ENCODE measurements at regions of chr3 and their contacts with region 1.

Region 1: DNA sequence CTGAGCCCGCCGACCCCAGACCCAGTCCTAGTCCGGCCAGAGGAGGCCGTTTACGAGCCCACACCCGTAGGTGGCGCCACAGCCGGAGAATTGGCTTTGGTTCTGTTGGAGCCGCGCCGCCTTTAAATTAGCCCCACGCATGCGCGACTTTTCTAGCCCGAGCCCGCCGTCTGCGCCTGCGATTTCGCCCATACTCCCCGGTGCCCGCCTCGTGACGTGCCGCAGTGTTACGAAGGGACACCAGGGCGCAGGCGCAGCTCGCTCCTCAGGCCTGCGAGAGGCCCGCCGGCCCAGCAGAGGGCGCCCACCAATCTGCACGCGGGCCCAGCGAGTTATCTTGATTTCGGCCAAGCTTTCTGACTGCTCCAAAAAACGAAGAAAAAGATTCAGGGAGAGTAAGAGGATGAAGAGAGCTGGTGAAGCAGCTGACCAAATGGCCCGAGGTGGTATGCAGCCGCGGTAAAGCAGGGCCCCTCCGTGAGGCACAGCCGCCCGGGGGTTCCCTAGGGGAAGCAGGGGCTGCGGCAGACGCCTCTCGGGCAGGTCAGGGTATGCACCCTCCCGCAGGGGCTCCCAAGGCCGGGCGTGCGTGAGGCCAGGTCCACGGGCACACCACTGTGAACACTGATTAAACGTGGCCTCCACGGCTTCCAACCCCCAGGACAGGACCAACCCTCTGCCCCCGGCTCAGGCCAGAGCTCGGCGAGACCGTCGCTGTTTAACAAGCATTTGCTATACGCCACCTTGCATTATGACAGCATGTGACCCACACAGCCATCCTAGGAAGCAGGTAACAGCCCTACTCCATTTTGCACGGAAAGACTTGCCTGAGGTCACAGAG is 32.8 kb downstream of the RPN1 start:
- DNase-seq: peak; percentile 97 to 99 (median 98)
- ATAC-seq: peak; percentile 95 to 98 (median 96)
- H3K4me3 ChIP-seq: peak overlapping the region; percentile 79 to 96 (median 87)
- H3K27ac ChIP-seq: peak overlapping the region; percentile 76 to 93 (median 88)
- H3K4me1 ChIP-seq: peaks cover 6 to 37% (median 17%) of the 10 kb centered on the region in 12 donors
- H3K27me3 ChIP-seq: no peaks in the 10 kb centered on the region
- CTCF ChIP-seq: peak; percentile 91 to 99 (median 94)
- POLR2A ChIP-seq: peak in 1 of 2 donors; percentile 56

Region 2: GRCh38 chr3:128537121-128537703 is 80.6 kb before region 1 on chr3:
- intact Hi-C with region 1: no loop called
- DNase-seq: no peak
- ATAC-seq: no peak
- H3K4me3 ChIP-seq: no peak overlapping the region
- H3K27ac ChIP-seq: no peak overlapping the region
- H3K4me1 ChIP-seq: no peaks in the 10 kb centered on the region
- H3K27me3 ChIP-seq: peaks cover 0 to 25% (median 0%) of the 10 kb centered on the region in 9 donors
- CTCF ChIP-seq: no peak
- POLR2A ChIP-seq: no peak

Region 3: GRCh38 chr3:128650096-128651050 is 32.6 kb after region 1 on chr3 and contains the start of gene RPN1:
- intact Hi-C with region 1: loop called in 1 of 10 experiments (anchors 5 kb)
- DNase-seq: peak; percentile 97 to 98 (median 98)
- ATAC-seq: peak; percentile 98 to 100 (median 100)
- H3K4me3 ChIP-seq: peak within 1 kb of the TSS; percentile 76 to 100 (median 92)
- H3K27ac ChIP-seq: peak within 1 kb of the TSS; percentile 92 to 99 (median 98)
- H3K4me1 ChIP-seq: peaks cover 5 to 36% (median 18%) of the 10 kb centered on the region in 12 donors
- H3K27me3 ChIP-seq: no peaks in the 10 kb centered on the region
- CTCF ChIP-seq: peak in 1 of 12 donors; percentile 7
- POLR2A ChIP-seq: peak; percentile 48 to 71
- total RNA-seq, gene RPN1: 71.7 to 161 (median 119) TPM

Region 4: GRCh38 chr3:128680602-128681368 is 63.0 kb after region 1 on chr3:
- intact Hi-C with region 1: loop called in 1 of 10 experiments (anchors 5 kb)
- DNase-seq: peak; percentile 99 to 100 (median 100)
- ATAC-seq: peak; percentile 100
- H3K4me3 ChIP-seq: peak overlapping the region; percentile 45 to 82 (median 70)
- H3K27ac ChIP-seq: peak overlapping the region; percentile 92 to 98 (median 96)
- H3K4me1 ChIP-seq: peaks cover 0 to 24% (median 7%) of the 10 kb centered on the region in 12 donors
- H3K27me3 ChIP-seq: no peaks in the 10 kb centered on the region
- CTCF ChIP-seq: peak; percentile 94 to 99 (median 96)
- POLR2A ChIP-seq: peak in 1 of 2 donors; percentile 68

Region 5: DNA sequence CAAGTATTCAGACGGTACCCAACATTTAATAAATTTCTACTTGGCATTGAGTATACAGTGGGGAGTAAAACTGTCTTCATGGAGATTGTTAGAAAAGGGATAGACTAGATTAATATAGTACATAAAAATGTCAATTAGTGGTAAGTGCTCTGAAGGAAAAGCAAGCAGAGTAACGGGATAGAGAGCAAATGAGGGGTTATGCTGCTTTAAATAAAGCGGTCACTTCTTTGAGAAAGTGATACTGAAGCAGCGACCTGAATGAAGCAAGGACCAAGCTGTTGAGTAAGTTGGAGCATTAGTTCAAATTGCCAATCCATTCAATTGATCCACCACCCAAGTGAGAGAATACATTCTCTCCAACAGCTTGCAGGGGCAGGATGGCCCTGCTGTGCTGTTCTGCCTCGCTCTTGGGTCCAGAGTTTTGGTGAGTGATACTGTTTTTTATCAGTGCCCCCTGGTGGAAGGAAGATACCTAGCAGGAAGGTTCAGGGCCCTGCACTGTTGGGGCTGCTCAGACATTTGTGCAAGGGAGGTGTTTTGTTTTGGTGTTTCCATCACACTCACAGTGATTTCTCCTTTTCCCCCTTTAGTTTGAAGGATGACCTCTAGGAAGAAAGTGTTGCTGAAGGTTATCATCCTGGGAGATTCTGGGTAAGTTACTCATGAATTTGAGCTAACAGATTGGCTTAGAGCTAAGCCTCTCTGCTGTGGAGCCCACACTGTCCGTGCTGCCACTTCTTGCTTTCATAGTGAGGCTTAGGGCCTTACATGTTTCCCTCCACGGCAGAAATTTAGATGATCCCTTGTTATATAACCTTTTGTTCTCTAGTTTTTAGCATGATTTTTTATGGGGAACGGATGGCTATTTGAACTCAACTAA is 177.2 kb after region 1 on chr3:
- intact Hi-C with region 1: loop called in 4 of 10 experiments (anchors 5 to 10 kb)
- DNase-seq: peak in 3 of 5 donors; percentile 59 to 61 (median 59)
- ATAC-seq: peak; percentile 78 to 94 (median 92)
- H3K4me3 ChIP-seq: no peak overlapping the region
- H3K27ac ChIP-seq: peak overlapping the region in 8 of 12 donors; percentile 44 to 71 (median 56)
- H3K4me1 ChIP-seq: peaks cover 0 to 69% (median 38%) of the 10 kb centered on the region in 12 donors
- H3K27me3 ChIP-seq: no peaks in the 10 kb centered on the region
- CTCF ChIP-seq: peak; percentile 71 to 88 (median 80)
- POLR2A ChIP-seq: no peak

Region 6: GRCh38 chr3:128845778-128846485 is 228.2 kb after region 1 on chr3:
- intact Hi-C with region 1: loop called in 8 of 10 experiments (anchors 1 to 10 kb)
- DNase-seq: peak; percentile 87 to 94 (median 92)
- ATAC-seq: peak; percentile 80 to 97 (median 94)
- H3K4me3 ChIP-seq: peak overlapping the region; percentile 14 to 60 (median 50)
- H3K27ac ChIP-seq: peak overlapping the region; percentile 51 to 91 (median 79)
- H3K4me1 ChIP-seq: peaks cover 0 to 21% (median 9%) of the 10 kb centered on the region in 12 donors
- H3K27me3 ChIP-seq: no peaks in the 10 kb centered on the region
- CTCF ChIP-seq: peak; percentile 46 to 77 (median 64)
- POLR2A ChIP-seq: no peak

Region 7: GRCh38 chr3:128917291-128917690 is 299.5 kb after region 1 on chr3:
- intact Hi-C with region 1: loop called in 1 of 10 experiments (anchors 5 kb)
- DNase-seq: no peak
- ATAC-seq: peak in 1 of 4 donors; percentile 40
- H3K4me3 ChIP-seq: no peak overlapping the region
- H3K27ac ChIP-seq: peak overlapping the region in 1 of 12 donors; percentile 9
- H3K4me1 ChIP-seq: peaks cover 0 to under 1% (median 0%) of the 10 kb centered on the region in 12 donors
- H3K27me3 ChIP-seq: no peaks in the 10 kb centered on the region
- CTCF ChIP-seq: peak in 7 of 12 donors; percentile 17 to 47 (median 26)
- POLR2A ChIP-seq: no peak

Measured in heart left ventricle (tissue), 16 donors.